AG04450 (cell line): ENCODE measurements at regions of chr4 and their contacts with region 1.

Region 1: DNA sequence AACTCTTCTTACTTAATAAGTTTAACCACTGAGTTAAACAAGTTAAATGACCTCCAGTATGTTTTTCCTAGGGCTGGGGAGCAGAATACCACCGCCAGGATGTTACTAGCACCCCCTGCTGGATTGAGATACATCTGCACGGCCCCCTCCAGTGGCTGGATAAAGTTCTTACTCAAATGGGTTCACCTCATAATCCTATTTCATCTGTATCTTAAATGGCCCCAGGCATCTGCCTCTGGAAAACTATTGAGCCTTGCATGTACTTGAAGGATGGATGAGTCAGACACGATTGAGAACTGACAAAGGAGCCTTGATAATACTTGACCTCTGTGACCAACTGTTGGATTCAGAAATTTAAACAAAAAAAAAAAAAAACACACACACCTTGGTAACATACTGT is 61.5 kb upstream of the MMAA start:
- DNase-seq: peak; percentile 43
- H3K4me3 ChIP-seq: no peak overlapping the region
- H3K27ac ChIP-seq: no peak overlapping the region
- H3K27me3 ChIP-seq: no peaks in the 10 kb centered on the region
- CTCF ChIP-seq: peak; percentile 99

Region 2: DNA sequence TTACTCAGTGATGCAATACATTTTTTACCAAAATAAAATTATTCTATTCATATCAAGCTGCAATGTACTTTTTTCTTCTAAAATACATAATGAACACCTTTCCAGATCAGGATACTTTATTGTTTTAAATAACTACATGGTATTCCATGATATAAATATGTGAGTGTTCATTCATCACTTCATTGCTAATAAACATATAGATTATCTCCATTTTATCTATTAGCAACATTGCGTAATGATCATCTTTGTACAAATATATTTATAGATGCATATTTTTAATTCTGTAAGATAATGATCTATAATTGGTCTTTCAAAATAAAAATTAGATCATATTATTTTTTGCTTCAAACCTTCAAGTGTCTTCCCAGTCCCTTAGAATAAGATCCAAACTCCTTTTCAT is 1067.9 kb before region 1 on chr4:
- CTCF ChIA-PET with region 1: no interaction called
- POLR2A ChIA-PET with region 1: no interaction called
- DNase-seq: no peak
- H3K4me3 ChIP-seq: no peak overlapping the region
- H3K27ac ChIP-seq: no peak overlapping the region
- H3K27me3 ChIP-seq: no peaks in the 10 kb centered on the region
- CTCF ChIP-seq: no peak

Region 3: DNA sequence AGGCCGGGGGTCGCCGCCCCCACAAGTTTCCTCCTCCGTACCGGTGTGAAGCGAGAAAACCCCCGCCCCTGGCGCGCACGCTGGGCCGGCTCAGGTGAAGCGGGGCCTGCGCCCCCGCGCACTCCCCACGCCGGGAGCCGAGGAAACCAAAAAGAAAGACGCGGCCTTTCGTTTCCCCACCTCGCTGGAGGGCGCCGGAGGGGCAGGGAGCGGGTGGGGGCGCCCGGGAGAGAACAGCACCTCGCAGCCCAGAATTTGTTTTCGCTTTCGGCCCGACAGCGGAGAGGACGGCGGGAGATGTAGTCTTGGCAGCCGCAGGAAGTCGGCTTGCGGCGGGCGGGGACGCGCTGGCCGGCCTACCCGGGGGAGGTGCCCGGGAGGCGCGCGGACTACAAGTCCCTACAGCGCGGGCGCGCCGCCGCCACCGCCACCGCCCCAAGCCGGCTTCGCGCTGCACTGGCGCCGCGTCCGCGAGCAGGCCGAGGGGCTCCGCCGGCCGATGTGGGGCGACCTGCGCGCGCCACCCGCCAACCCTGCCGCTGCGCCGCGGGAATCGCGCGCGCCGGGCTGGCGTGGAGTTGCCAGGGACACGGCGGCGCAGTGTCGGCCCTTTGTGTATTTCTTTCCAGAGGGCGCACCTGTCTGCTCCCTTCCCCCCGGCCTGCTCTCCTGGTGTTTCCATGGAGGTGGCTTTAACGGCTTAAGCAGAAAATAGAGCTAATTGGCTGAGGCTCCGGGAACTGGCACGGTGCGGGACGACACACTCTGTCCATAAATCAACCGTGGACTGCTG is 377.2 kb before region 1 on chr4 and contains the start of gene OTUD4:
- CTCF ChIA-PET with region 1: interaction called, 15 read pairs
- POLR2A ChIA-PET with region 1: interaction called, 4 read pairs
- DNase-seq: peak; percentile 81
- H3K4me3 ChIP-seq: peak within 1 kb of the TSS; percentile 86
- H3K27ac ChIP-seq: peak within 1 kb of the TSS; percentile 86
- H3K27me3 ChIP-seq: peaks cover 3% of the 10 kb centered on the region
- CTCF ChIP-seq: peak; percentile 23; the same call in 1 of the 2 replicates
- polyA plus RNA-seq, gene OTUD4: 19.7 and 27.1 TPM in 2 replicates

Region 4: DNA sequence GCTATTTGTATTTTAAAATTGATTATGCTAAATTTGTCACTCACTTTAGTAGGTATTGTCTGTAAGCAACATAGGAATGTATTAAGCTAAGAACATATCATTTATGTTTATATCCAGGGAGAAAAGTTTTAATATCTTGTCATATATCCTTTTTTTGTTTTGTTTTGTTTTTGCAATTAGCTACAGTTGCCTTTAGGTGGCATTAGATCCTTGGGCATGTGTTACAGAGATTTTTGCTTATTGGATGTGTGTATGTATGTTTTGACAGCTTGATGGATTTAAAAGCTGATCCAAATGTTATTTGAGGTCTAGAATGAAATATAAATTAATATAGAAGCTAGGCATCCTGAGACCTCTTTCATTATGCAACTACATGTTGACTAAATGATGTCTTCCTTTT is 341.2 kb before region 1 on chr4:
- CTCF ChIA-PET with region 1: interaction called, 60 read pairs
- POLR2A ChIA-PET with region 1: no interaction called
- DNase-seq: no peak
- H3K4me3 ChIP-seq: no peak overlapping the region
- H3K27ac ChIP-seq: no peak overlapping the region
- H3K27me3 ChIP-seq: no peaks in the 10 kb centered on the region
- CTCF ChIP-seq: peak; percentile 78

Region 5: GRCh38 chr4:145234091-145234706 is 323.5 kb before region 1 on chr4:
- CTCF ChIA-PET with region 1: interaction called, 19 read pairs
- POLR2A ChIA-PET with region 1: no interaction called
- DNase-seq: peak; percentile 34
- H3K4me3 ChIP-seq: no peak overlapping the region
- H3K27ac ChIP-seq: no peak overlapping the region
- H3K27me3 ChIP-seq: no peaks in the 10 kb centered on the region
- CTCF ChIP-seq: peak; percentile 95

Region 6: GRCh38 chr4:145540235-145540634 is 17.5 kb before region 1 on chr4:
- CTCF ChIA-PET with region 1: interaction called, 28 read pairs
- POLR2A ChIA-PET with region 1: no interaction called
- DNase-seq: no peak
- H3K4me3 ChIP-seq: no peak overlapping the region
- H3K27ac ChIP-seq: no peak overlapping the region
- H3K27me3 ChIP-seq: no peaks in the 10 kb centered on the region
- CTCF ChIP-seq: no peak

Region 7: GRCh38 chr4:145545538-145546174 is 12.1 kb before region 1 on chr4:
- CTCF ChIA-PET with region 1: interaction called, 28 read pairs
- POLR2A ChIA-PET with region 1: interaction called, 3 read pairs
- DNase-seq: peak; percentile 95
- H3K4me3 ChIP-seq: no peak overlapping the region
- H3K27ac ChIP-seq: no peak overlapping the region
- H3K27me3 ChIP-seq: no peaks in the 10 kb centered on the region
- CTCF ChIP-seq: no peak

Region 8: GRCh38 chr4:145587088-145587754 is 29.5 kb after region 1 on chr4:
- CTCF ChIA-PET with region 1: no interaction called
- POLR2A ChIA-PET with region 1: no interaction called
- DNase-seq: no peak
- H3K4me3 ChIP-seq: no peak overlapping the region
- H3K27ac ChIP-seq: no peak overlapping the region
- H3K27me3 ChIP-seq: peaks cover 14% of the 10 kb centered on the region
- CTCF ChIP-seq: no peak